ENCODE measurements at regions of chr18 and their contacts with region 1.

Region 1: DNA sequence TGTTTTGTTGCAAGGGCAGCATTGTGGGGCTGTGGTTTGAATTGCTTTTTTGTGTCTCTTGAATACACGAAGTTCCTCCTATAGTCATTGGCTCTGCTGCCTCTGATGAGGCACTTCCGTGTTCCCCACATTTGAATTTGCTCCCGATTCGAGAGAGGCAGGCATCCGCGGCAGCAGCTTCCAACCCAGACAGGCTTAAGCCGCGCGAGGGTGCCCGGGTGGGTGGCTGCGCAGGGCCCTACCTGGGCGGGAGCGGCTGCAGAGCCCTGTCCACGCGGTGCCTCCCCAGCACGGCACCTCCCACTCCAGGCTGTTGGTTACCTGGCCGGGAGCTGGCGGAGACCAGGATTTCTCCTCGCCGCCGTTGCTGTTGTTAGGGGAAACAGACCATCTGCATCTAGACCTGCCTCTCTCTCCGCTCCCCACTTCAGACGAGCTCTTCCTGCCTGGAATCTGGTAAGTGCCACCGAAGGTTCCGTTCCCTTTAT is 151.3 kb downstream of the NEDD4L start:
- DNase-seq: peak; percentile 38 to 88 (median 68)

Region 2: DNA sequence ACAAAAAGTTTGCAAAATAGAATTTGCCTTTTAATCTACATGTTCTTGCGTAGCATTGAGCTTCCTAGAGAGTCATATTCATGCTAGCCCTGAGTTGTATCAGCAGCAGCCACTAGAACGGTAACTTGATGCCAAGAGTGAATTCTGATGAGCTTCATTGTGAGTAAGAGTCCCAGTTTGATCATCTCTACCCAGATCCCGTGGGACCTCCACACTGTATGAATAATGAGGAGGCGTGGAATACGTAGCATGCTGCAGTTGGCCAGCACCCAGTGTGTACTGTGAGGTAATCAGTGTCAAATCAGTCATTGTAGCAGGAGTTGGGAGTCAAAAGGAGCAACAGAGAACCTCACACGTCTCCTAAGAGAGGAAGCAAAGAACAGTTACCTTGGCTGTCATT is 46.6 kb after region 1 on chr18:
- intact Hi-C with region 1: no loop called
- DNase-seq: peak in 28 of 42 donors; percentile 16 to 82 (median 52)

Region 3: GRCh38 chr18:58314284-58314683 is 119.0 kb after region 1 on chr18:
- intact Hi-C with region 1: loop called (anchors 10 kb)
- DNase-seq: peak in 37 of 42 donors; percentile 27 to 91 (median 62)